ENCODE measurements at regions of chr19 and their contacts with region 1.

Region 1: DNA sequence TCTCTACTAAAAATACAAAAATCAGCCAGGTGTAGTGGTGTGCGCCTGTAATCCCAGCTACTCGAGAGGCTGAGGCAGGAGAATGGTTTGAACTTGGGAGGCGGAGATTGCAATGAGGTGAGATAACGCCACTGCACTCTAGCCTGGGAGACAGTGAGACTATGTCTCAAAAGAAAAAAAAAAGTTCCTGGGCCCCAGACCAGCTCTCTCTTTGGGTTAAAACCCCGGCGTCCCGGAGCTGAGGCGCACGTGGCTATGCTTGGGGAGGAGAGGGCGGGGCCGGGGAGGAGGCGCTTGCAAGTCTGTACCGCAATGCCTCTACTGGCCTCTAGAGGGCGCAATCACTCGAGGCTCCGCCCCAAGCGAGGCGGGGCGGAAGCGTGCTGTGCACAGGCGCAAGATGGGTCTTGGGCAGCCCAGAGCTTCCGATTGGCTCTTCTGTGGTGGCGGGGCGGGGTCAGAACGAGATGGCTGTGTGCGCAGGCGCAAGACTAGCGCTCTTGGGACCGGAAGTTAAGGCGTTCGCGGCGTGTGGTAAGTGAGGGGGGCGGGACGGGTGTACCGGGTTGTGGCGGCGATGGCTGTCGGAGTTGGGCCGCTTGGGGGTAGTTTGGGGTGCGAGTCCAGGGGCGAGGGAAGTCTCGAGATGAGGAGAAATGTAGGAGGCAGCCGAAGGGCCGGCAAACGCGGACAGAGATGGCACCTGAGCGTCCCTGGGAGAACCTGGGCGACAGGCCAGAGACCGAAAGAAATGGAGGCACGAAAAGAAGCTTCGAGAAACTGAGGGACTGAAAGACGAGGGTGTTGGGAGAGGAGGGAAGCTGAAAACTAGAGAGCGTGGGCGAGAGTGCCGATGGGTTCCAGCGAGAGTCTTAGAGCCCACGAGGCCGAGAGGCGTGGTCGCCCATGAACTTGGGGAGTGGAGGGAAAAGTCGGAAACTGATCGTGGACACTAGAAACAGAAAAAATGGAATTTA is at the start of gene DHX34:
- DNase-seq: peak; percentile 99
- H3K4me3 Mint-ChIP-seq: peak within 1 kb of the TSS; percentile 94
- H3K27ac Mint-ChIP-seq: peak within 1 kb of the TSS; percentile 91
- H3K4me1 Mint-ChIP-seq: peaks cover 18% of the 10 kb centered on the region
- H3K27me3 Mint-ChIP-seq: no peaks in the 10 kb centered on the region
- CTCF ChIP-seq: peak; percentile 97
- total RNA-seq, gene DHX34: 27.6 and 34.7 TPM in 2 replicates

Region 2: DNA sequence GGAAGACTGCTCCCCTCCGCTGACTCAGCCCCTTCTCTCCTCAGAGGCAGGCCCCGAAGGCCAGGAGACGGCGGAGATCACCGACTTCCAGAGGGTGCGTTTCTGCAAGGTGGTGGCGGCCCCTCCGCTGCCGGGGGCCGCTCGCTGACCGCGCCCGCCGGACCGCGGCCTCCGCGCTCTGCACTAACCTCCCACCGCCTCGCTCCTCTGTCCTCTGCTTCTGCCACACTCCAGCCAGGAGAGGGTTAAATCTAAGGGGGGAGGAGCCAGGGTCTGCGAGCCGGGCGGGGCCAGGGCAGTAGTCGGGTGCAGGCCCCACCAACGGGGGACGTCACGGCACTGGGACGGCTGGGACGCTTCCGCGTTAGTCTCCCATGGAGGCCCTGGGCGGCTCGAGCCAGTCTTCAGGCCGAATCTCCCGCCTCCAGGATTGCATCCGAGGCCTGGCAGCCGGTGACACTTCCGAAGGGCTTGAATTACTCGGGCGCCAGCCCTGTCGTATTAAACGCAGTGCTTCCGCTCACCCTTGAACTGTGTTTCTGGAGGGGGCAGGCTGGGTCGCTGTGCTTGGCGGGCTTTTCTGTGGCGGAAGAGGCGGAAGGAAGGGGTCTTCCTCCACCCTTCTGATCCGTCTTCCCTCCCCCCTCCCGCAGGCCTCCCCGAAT is 75.7 kb before region 1 on chr19:
- CTCF ChIA-PET with region 1: interaction called, 8 read pairs
- POLR2A ChIA-PET with region 1: interaction called, 17 read pairs
- intact Hi-C with region 1: no loop called
- DNase-seq: peak; percentile 89
- H3K4me3 Mint-ChIP-seq: peak overlapping the region; percentile 79
- H3K27ac Mint-ChIP-seq: peak overlapping the region; percentile 77
- H3K4me1 Mint-ChIP-seq: peaks cover 16% of the 10 kb centered on the region
- H3K27me3 Mint-ChIP-seq: no peaks in the 10 kb centered on the region
- CTCF ChIP-seq: no peak

Region 3: GRCh38 chr19:47305309-47305751 is 43.8 kb before region 1 on chr19:
- CTCF ChIA-PET with region 1: interaction called, 5 read pairs
- POLR2A ChIA-PET with region 1: interaction called, 5 read pairs
- intact Hi-C with region 1: loop called (anchors 5 kb)
- DNase-seq: peak; percentile 84
- H3K4me3 Mint-ChIP-seq: peak overlapping the region; percentile 62
- H3K27ac Mint-ChIP-seq: peak overlapping the region; percentile 84
- H3K4me1 Mint-ChIP-seq: peaks cover 21% of the 10 kb centered on the region
- H3K27me3 Mint-ChIP-seq: no peaks in the 10 kb centered on the region
- CTCF ChIP-seq: peak; percentile 86

Region 4: GRCh38 chr19:47324502-47324901 is 24.6 kb before region 1 on chr19:
- CTCF ChIA-PET with region 1: interaction called, 16 read pairs
- POLR2A ChIA-PET with region 1: interaction called, 5 read pairs
- intact Hi-C with region 1: no loop called
- DNase-seq: no peak
- H3K4me3 Mint-ChIP-seq: no peak overlapping the region
- H3K27ac Mint-ChIP-seq: no peak overlapping the region
- H3K4me1 Mint-ChIP-seq: no peaks in the 10 kb centered on the region
- H3K27me3 Mint-ChIP-seq: no peaks in the 10 kb centered on the region
- CTCF ChIP-seq: no peak

Region 5: GRCh38 chr19:47336853-47337279 is 12.2 kb before region 1 on chr19:
- CTCF ChIA-PET with region 1: interaction called, 19 read pairs
- POLR2A ChIA-PET with region 1: interaction called, 21 read pairs
- intact Hi-C with region 1: no loop called
- DNase-seq: peak; percentile 33
- H3K4me3 Mint-ChIP-seq: no peak overlapping the region
- H3K27ac Mint-ChIP-seq: peak overlapping the region; percentile 35
- H3K4me1 Mint-ChIP-seq: peaks cover 8% of the 10 kb centered on the region
- H3K27me3 Mint-ChIP-seq: no peaks in the 10 kb centered on the region
- CTCF ChIP-seq: no peak

Region 6: GRCh38 chr19:47370045-47370611 is 21.0 kb after region 1 on chr19:
- CTCF ChIA-PET with region 1: interaction called, 19 read pairs
- POLR2A ChIA-PET with region 1: interaction called, 12 read pairs
- intact Hi-C with region 1: no loop called
- DNase-seq: peak; percentile 87
- H3K4me3 Mint-ChIP-seq: no peak overlapping the region
- H3K27ac Mint-ChIP-seq: no peak overlapping the region
- H3K4me1 Mint-ChIP-seq: peaks cover 14% of the 10 kb centered on the region
- H3K27me3 Mint-ChIP-seq: no peaks in the 10 kb centered on the region
- CTCF ChIP-seq: no peak

Region 7: GRCh38 chr19:47391510-47392223 is 42.6 kb after region 1 on chr19:
- CTCF ChIA-PET with region 1: interaction called, 10 read pairs
- POLR2A ChIA-PET with region 1: interaction called, 6 read pairs
- intact Hi-C with region 1: no loop called
- DNase-seq: peak; percentile 82
- H3K4me3 Mint-ChIP-seq: no peak overlapping the region
- H3K27ac Mint-ChIP-seq: no peak overlapping the region
- H3K4me1 Mint-ChIP-seq: peaks cover 9% of the 10 kb centered on the region
- H3K27me3 Mint-ChIP-seq: peaks cover 17% of the 10 kb centered on the region
- CTCF ChIP-seq: peak; percentile 90

Measured in MCF 10A (cell line).